B cell (primary cell): ENCODE measurements at regions of chr9 and their contacts with region 1.

Region 1: GRCh38 chr9:15606643-15607472 is 54.0 kb downstream of the CCDC171 start:
- DNase-seq: peak; percentile 61
- ATAC-seq: peak; percentile 41
- H3K4me3 ChIP-seq: no peak overlapping the region
- H3K4me3 Mint-ChIP-seq: no peak overlapping the region
- H3K27ac ChIP-seq: no peak overlapping the region
- H3K27ac Mint-ChIP-seq: no peak overlapping the region
- H3K4me1 ChIP-seq: no peaks in the 10 kb centered on the region
- H3K4me1 Mint-ChIP-seq: no peaks in the 10 kb centered on the region
- H3K27me3 ChIP-seq: no peaks in the 10 kb centered on the region
- H3K27me3 Mint-ChIP-seq: no peaks in the 10 kb centered on the region
- CTCF ChIP-seq: peak; percentile 82

Region 2: DNA sequence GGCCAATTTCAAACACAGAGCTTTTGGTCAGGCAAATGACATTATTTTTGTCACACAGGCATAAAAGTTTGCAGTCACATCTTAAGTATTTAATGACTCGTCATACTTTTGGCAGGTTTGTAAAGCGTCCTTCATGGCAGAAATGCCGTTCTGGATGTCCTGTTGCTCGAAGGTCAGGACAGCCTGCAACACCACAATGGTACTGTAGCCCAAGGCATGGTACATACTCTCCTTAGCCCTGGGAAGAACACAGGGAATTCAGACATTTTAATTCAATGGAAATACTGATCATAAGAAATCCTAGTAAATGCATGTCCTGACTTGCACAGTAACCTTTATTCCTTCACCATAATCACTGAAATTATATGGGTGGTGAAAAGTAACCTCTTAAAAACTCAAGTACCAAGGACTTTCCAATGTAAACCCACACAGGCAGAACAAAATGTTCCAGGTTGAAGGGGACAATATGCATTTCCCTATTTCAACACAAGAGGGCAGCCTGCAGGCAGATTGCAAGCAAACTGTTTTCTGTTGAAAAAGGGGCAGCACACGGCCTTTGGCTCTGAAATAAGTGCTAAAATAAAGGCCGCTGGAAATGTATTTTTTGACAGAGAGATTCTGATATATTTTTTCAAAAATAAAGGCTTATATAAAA is 395.6 kb before region 1 on chr9:
- CTCF ChIA-PET with region 1: interaction called, 53 read pairs
- POLR2A ChIA-PET with region 1: no interaction called
- intact Hi-C with region 1: loop called (anchors 1 kb)
- DNase-seq: peak; percentile 69
- ATAC-seq: peak; percentile 54
- H3K4me3 ChIP-seq: no peak overlapping the region
- H3K4me3 Mint-ChIP-seq: no peak overlapping the region
- H3K27ac ChIP-seq: no peak overlapping the region
- H3K27ac Mint-ChIP-seq: no peak overlapping the region
- H3K4me1 ChIP-seq: no peaks in the 10 kb centered on the region
- H3K4me1 Mint-ChIP-seq: no peaks in the 10 kb centered on the region
- H3K27me3 ChIP-seq: no peaks in the 10 kb centered on the region
- H3K27me3 Mint-ChIP-seq: no peaks in the 10 kb centered on the region
- CTCF ChIP-seq: peak; percentile 96

Region 3: GRCh38 chr9:15277400-15278090 is 329.3 kb before region 1 on chr9:
- CTCF ChIA-PET with region 1: interaction called, 14 read pairs
- POLR2A ChIA-PET with region 1: no interaction called
- intact Hi-C with region 1: no loop called
- DNase-seq: peak; percentile 54
- ATAC-seq: no peak
- H3K4me3 ChIP-seq: no peak overlapping the region
- H3K4me3 Mint-ChIP-seq: no peak overlapping the region
- H3K27ac ChIP-seq: no peak overlapping the region
- H3K27ac Mint-ChIP-seq: no peak overlapping the region
- H3K4me1 ChIP-seq: peaks cover 0 to 3% of the 10 kb centered on the region in 2 donors
- H3K4me1 Mint-ChIP-seq: peaks cover 6% of the 10 kb centered on the region
- H3K27me3 ChIP-seq: no peaks in the 10 kb centered on the region
- H3K27me3 Mint-ChIP-seq: no peaks in the 10 kb centered on the region
- CTCF ChIP-seq: peak; percentile 71

Region 4: DNA sequence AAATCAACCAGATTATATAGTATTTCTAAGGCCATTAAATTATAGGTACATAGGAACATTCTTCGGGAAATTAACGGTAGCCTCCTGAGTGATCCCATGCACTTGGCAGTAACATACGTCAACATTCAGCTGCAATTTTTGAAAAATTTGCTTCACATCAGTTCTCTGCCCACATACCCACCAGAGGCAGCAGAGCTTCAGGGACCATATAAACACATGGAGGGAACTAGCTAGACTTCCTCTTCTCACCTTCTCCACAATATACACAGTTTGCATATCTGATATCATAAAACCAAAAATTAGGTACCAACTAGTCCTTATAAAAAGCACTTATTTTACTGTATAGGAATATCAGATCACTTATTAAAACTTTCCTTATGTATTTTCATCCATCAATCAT is 100.9 kb before region 1 on chr9:
- CTCF ChIA-PET with region 1: interaction called, 31 read pairs
- POLR2A ChIA-PET with region 1: no interaction called
- intact Hi-C with region 1: loop called (anchors 2 kb)
- DNase-seq: peak; percentile 56
- ATAC-seq: no peak
- H3K4me3 ChIP-seq: no peak overlapping the region
- H3K4me3 Mint-ChIP-seq: no peak overlapping the region
- H3K27ac ChIP-seq: peak overlapping the region in 1 of 2 donors; percentile 1
- H3K27ac Mint-ChIP-seq: no peak overlapping the region
- H3K4me1 ChIP-seq: peaks cover 7 to 23% of the 10 kb centered on the region in 2 donors
- H3K4me1 Mint-ChIP-seq: peaks cover 56% of the 10 kb centered on the region
- H3K27me3 ChIP-seq: no peaks in the 10 kb centered on the region
- H3K27me3 Mint-ChIP-seq: no peaks in the 10 kb centered on the region
- CTCF ChIP-seq: peak; percentile 63

Region 5: GRCh38 chr9:15552636-15553527 is 54.0 kb before region 1 on chr9 and contains the start of gene CCDC171:
- CTCF ChIA-PET with region 1: interaction called, 13 read pairs
- POLR2A ChIA-PET with region 1: no interaction called
- intact Hi-C with region 1: no loop called
- DNase-seq: peak; percentile 91
- ATAC-seq: peak; percentile 81
- H3K4me3 ChIP-seq: peak within 1 kb of the TSS; percentile 75 to 96 (median 83)
- H3K4me3 Mint-ChIP-seq: peak within 1 kb of the TSS; percentile 98
- H3K27ac ChIP-seq: peak within 1 kb of the TSS; percentile 40 to 52
- H3K27ac Mint-ChIP-seq: peak within 1 kb of the TSS; percentile 90
- H3K4me1 ChIP-seq: peaks cover 13 to 18% of the 10 kb centered on the region in 2 donors
- H3K4me1 Mint-ChIP-seq: peaks cover 17% of the 10 kb centered on the region
- H3K27me3 ChIP-seq: peaks cover 0 to 3% (median 0%) of the 10 kb centered on the region in 4 experiments
- H3K27me3 Mint-ChIP-seq: no peaks in the 10 kb centered on the region
- CTCF ChIP-seq: peak; percentile 8
- total RNA-seq, gene CCDC171: 5.1 and 6.3 TPM in 2 replicates

Region 6: GRCh38 chr9:15901572-15901971 is 294.7 kb after region 1 on chr9:
- CTCF ChIA-PET with region 1: no interaction called
- POLR2A ChIA-PET with region 1: no interaction called
- intact Hi-C with region 1: no loop called
- DNase-seq: no peak
- ATAC-seq: no peak
- H3K4me3 ChIP-seq: no peak overlapping the region
- H3K4me3 Mint-ChIP-seq: no peak overlapping the region
- H3K27ac ChIP-seq: no peak overlapping the region
- H3K27ac Mint-ChIP-seq: no peak overlapping the region
- H3K4me1 ChIP-seq: no peaks in the 10 kb centered on the region
- H3K4me1 Mint-ChIP-seq: no peaks in the 10 kb centered on the region
- H3K27me3 ChIP-seq: no peaks in the 10 kb centered on the region
- H3K27me3 Mint-ChIP-seq: no peaks in the 10 kb centered on the region
- CTCF ChIP-seq: no peak